PC-9 (cell line): ENCODE measurements at regions of chr7 and their contacts with region 1.

Region 1: DNA sequence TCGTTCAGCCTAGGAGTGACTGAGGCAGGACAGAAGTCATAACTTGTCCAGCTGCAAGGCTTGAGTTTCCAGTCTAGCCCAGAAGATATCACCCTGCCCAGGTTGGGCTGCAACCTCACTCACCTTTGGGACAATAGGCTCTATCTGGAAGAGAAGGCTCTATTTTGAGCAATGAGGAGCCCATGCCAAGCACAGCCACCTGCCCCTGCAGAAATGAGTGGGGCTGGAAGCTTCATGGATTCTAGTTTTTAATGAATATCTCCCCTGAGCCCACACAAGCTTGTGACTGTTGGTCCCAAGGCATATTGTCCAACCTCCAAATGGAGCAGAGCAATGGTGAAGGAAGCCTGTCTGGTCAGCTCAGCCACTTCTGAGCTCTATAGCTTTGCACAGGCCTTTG is 42.7 kb downstream of the ZNF273 start:
- DNase-seq: no peak
- H3K4me3 ChIP-seq: no peak overlapping the region
- H3K27ac ChIP-seq: no peak overlapping the region
- H3K4me1 ChIP-seq: no peaks in the 10 kb centered on the region
- H3K27me3 ChIP-seq: no peaks in the 10 kb centered on the region
- CTCF ChIP-seq: no peak

Region 2: GRCh38 chr7:65006094-65006992 is 60.6 kb after region 1 on chr7 and contains the start of gene ERV3-1:
- CTCF ChIA-PET with region 1: no interaction called
- POLR2A ChIA-PET with region 1: interaction called, 13 read pairs
- intact Hi-C with region 1: no loop called
- DNase-seq: peak; percentile 90 to 91
- H3K4me3 ChIP-seq: peak within 1 kb of the TSS; percentile 77
- H3K27ac ChIP-seq: peak within 1 kb of the TSS; percentile 35; the same call in 1 of the 2 replicates
- H3K4me1 ChIP-seq: peaks cover 8% of the 10 kb centered on the region; the same call in 1 of the 2 replicates
- H3K27me3 ChIP-seq: no peaks in the 10 kb centered on the region
- CTCF ChIP-seq: no peak
- total RNA-seq, gene ERV3-1: 14.0 and 22.5 TPM in 2 replicates

Region 3: GRCh38 chr7:65239707-65240352 is 294.1 kb after region 1 on chr7:
- CTCF ChIA-PET with region 1: no interaction called
- POLR2A ChIA-PET with region 1: no interaction called
- intact Hi-C with region 1: no loop called
- DNase-seq: peak in 1 of 2 experiments; percentile 19
- H3K4me3 ChIP-seq: peak overlapping the region; percentile 42; the same call in 1 of the 2 replicates
- H3K27ac ChIP-seq: no peak overlapping the region
- H3K4me1 ChIP-seq: no peaks in the 10 kb centered on the region
- H3K27me3 ChIP-seq: peaks cover 17% of the 10 kb centered on the region
- CTCF ChIP-seq: no peak

Region 4: GRCh38 chr7:65931685-65932084 is 985.9 kb after region 1 on chr7:
- CTCF ChIA-PET with region 1: no interaction called
- POLR2A ChIA-PET with region 1: no interaction called
- intact Hi-C with region 1: no loop called
- DNase-seq: no peak
- H3K4me3 ChIP-seq: no peak overlapping the region
- H3K27ac ChIP-seq: no peak overlapping the region
- H3K4me1 ChIP-seq: no peaks in the 10 kb centered on the region
- H3K27me3 ChIP-seq: no peaks in the 10 kb centered on the region
- CTCF ChIP-seq: no peak